H1 (cell line): ENCODE measurements at regions of chr5 and their contacts with region 1.

Region 1: DNA sequence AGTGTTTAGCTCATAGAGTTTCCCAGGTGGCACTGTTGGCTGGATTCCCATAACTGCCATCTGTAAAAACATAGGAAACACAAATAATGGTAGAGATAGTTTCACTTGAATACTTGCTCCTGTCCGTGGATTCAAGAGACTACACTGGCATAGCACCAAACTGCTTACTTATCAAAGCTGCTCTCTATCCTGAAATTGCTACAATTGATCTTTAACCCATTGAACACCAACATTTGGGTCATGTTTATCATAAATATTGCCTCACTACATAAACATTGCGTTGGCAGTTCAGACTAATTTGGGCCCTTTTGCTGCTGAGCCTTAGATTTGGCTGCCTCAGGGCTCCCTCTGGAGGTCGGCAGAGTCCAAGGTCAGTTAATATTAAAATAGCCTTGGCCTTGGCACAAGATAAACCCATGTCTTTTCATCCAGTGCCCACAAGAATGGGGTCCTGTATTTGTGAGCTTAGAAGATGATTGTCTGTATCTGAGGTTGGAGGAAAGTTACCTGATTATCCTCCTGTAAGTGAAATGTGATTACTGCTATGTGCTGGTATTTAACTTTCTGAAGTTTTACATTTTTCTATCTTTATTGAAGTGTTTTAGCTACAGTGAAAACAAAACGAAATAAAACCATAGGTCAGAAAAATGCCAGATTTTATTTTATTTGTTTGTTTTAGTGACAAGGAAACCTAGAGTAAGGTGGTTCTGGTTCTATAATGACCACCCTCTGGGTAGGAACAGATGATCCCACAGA is 4.0 kb upstream of the RANBP3L start:
- DNase-seq: no peak
- H3K4me3 ChIP-seq: no peak overlapping the region
- H3K27ac ChIP-seq: no peak overlapping the region
- H3K4me1 ChIP-seq: no peaks in the 10 kb centered on the region
- H3K27me3 ChIP-seq: no peaks in the 10 kb centered on the region
- CTCF ChIP-seq: peak; percentile 49 to 77 (median 76)
- EP300 ChIP-seq: no peak
- POLR2A ChIP-seq: no peak
- RAD21 ChIP-seq: peak; percentile 85 to 88

Region 2: DNA sequence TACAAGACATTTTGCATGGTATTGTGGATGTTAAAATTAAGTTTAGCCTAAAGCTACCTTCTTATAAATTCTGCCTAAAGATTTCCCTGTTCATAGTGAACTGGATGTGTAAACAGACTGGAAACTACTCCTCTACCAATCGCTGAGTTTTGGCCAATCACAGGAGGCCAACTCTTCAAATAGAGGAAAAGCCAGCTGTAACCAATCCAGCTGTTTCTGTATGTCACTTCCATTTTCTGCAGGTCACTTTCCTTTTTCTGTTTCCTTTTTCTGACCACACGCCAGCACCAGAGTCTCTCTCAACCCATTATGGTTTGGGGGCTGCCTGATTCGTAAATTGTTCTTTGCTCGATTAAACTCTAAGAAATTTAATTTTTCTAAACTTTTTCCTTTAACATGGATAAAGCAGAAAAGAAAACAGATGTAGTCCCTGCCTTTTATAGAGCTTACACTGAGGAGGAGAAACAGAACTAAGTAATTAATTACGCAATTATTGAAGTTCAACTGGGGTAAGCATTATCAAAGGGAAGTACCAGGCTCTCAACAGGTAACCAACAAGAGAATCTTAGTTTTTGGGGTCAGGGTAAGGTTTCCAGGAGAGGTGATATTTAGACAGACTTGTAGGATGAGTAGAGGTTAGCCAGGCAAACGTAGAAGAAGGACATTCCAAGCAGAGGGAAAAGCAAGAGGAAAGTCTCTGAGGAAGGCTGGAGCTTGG is 31.8 kb before region 1 on chr5:
- CTCF ChIA-PET with region 1: interaction called, 10 read pairs
- POLR2A ChIA-PET with region 1: no interaction called
- DNase-seq: no peak
- H3K4me3 ChIP-seq: no peak overlapping the region
- H3K27ac ChIP-seq: no peak overlapping the region
- H3K4me1 ChIP-seq: peaks cover 0 to 4% (median 0%) of the 10 kb centered on the region in 4 experiments; a peak in 1 of 7 replicates
- H3K27me3 ChIP-seq: no peaks in the 10 kb centered on the region; a peak in 1 of 7 replicates
- CTCF ChIP-seq: no peak
- EP300 ChIP-seq: no peak
- POLR2A ChIP-seq: no peak
- RAD21 ChIP-seq: no peak